Gastrocnemius medialis (tissue), 4 donors: ENCODE measurements at regions of chr21 and their contacts with region 1.

Region 1: GRCh38 chr21:42892931-42893755 is at the start of gene NDUFV3:
- DNase-seq: peak; percentile 99 to 100
- ATAC-seq: peak; percentile 90 to 92
- H3K4me3 ChIP-seq: peak within 1 kb of the TSS; percentile 67 to 80 (median 74)
- H3K27ac ChIP-seq: peak within 1 kb of the TSS; percentile 87 to 95 (median 92)
- H3K4me1 ChIP-seq: peaks cover 12 to 15% of the 10 kb centered on the region in 2 donors
- H3K27me3 ChIP-seq: no peaks in the 10 kb centered on the region
- CTCF ChIP-seq: peak in 1 of 5 experiments; percentile 10
- POLR2A ChIP-seq: peak; percentile 96 to 98
- total RNA-seq, gene NDUFV3: 96.4 to 109 (median 97.7) TPM

Region 2: GRCh38 chr21:41743321-41743720 is 1149.8 kb before region 1 on chr21:
- in situ Hi-C with region 1: no loop called
- intact Hi-C with region 1: no loop called
- DNase-seq: no peak
- ATAC-seq: no peak
- H3K4me3 ChIP-seq: no peak overlapping the region
- H3K27ac ChIP-seq: no peak overlapping the region
- H3K4me1 ChIP-seq: no peaks in the 10 kb centered on the region
- H3K27me3 ChIP-seq: peaks cover 0 to 5% (median 0%) of the 10 kb centered on the region in 3 donors
- CTCF ChIP-seq: no peak
- POLR2A ChIP-seq: no peak

Region 3: DNA sequence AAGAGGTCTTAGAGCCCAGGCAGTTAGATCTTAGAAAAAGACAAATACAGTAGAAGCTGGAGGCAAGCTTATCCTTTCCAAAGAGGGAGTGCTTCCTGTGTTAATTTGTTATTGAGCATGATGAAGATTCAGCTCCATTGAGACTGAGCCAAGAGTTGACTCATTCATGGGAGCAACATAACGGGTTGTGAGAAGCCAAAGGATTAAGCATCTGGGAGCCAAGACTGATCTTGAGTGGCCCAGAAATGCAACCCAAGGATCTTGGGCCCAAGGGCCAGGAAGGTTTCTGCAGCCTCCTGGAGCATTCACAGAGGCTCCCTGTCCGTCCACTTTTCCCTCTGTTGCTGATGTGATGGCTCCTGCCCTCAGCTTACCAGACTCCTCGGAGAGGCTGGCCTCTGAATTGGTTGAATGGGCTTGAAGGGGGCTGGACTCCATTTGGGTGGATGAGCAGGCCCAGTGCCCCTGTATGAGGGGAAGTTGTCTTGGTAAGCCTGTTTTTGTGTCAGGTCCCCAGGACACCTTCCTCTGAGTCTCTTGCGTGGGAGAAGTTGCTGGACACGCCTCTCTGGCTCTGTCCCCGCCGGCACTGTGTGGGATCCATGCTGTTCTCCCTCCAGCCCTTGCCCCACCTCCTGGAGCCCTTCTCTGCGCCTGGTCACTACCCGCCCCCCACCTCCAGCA is 197.3 kb before region 1 on chr21:
- in situ Hi-C with region 1: no loop called
- intact Hi-C with region 1: no loop called
- DNase-seq: no peak
- ATAC-seq: no peak
- H3K4me3 ChIP-seq: no peak overlapping the region
- H3K27ac ChIP-seq: no peak overlapping the region
- H3K4me1 ChIP-seq: no peaks in the 10 kb centered on the region
- H3K27me3 ChIP-seq: no peaks in the 10 kb centered on the region
- CTCF ChIP-seq: no peak
- POLR2A ChIP-seq: no peak

Region 4: GRCh38 chr21:42766739-42767560 is 126.2 kb before region 1 on chr21:
- in situ Hi-C with region 1: no loop called
- intact Hi-C with region 1: no loop called
- DNase-seq: no peak
- ATAC-seq: no peak
- H3K4me3 ChIP-seq: no peak overlapping the region
- H3K27ac ChIP-seq: no peak overlapping the region
- H3K4me1 ChIP-seq: no peaks in the 10 kb centered on the region
- H3K27me3 ChIP-seq: no peaks in the 10 kb centered on the region
- CTCF ChIP-seq: no peak
- POLR2A ChIP-seq: no peak

Region 5: DNA sequence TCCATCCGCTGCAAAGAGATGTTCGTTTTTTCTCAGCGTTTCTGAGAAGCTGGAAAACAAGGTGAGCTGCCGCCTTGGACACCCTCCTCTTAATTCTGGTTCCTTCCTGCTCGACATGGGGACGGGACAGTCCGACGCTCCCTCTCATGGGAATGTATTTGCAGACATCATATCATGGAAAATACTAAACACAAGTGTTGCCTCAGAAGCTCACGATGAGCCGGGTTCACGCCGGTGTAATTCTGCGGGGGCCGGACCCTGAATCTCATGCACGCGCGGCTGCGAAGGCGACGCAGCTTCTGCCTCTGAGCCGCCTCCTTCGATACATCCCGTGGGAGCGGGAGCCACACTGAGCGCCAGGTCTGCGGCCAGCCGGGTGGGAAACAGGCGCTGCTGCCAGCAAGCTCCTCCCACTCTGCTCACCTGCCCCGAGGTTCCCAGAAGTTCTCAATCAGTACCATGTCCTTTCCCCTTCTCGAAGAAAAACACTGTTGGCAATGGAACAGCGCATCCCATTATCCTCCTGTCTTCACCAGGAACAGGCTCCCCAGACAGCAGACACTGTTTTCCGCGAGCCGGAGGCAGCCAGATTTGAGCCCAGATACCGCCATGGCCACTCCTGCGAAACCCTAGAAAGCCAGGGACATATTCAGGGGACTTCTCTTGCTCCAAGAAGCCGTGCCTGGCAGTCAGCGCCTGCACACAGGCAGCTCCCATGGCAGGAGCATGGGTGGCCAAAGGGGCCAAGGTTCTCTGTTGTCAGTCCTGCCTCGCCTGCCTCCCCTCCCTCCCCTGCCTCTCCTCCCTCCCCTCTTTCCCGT is 111.8 kb before region 1 on chr21:
- in situ Hi-C with region 1: loop called in 1 of 4 experiments (anchors 25 kb)
- intact Hi-C with region 1: no loop called
- DNase-seq: no peak
- ATAC-seq: peak in 1 of 2 donors; percentile 25
- H3K4me3 ChIP-seq: peak overlapping the region; percentile 14 to 39 (median 28)
- H3K27ac ChIP-seq: peak overlapping the region in 3 of 4 donors; percentile 52 to 76 (median 67)
- H3K4me1 ChIP-seq: peaks cover 0 to 3% of the 10 kb centered on the region in 2 donors
- H3K27me3 ChIP-seq: peaks cover 31 to 44% (median 32%) of the 10 kb centered on the region in 3 donors
- CTCF ChIP-seq: no peak
- POLR2A ChIP-seq: no peak

Region 6: DNA sequence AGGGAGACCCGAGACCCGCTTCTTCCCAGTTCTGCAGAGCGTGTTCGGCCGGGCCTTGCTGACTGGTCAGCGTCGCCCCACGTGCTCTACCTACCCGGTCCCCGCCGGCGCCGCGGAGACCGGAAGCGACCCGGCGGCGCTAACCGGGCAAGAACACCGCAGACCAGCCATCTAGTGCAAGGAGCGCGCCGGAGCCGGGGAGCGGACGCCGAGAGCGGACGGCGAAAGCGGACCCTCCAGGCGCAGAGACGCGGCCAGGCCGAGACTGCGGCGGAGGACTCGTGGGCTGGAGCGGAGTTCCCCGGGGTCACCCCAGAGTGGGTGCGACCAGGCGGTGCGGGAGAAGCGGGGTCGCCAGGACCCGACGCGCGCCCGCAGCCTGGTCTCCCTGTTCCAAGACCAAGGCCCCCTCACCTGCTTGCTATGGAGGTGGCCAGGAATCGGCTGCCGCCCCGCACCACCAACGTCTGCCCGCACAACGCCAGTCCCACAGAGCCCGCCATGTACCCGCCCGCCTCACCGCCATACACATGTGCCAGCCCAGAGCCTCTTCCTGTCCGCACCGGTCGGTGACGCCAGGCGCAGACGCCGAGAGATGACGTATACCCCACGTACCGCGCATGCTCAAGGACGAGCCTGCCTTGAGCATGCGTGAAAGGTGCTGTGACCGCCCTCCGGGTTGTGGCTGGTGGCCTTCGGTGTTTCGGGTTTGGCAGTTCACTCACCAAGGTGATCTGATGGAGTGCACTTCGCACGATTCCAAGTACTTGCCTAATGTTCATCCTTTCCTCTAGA is 14.0 kb before region 1 on chr21 and contains the start of gene WDR4:
- in situ Hi-C with region 1: no loop called
- intact Hi-C with region 1: loop called (anchors 1 kb)
- DNase-seq: peak; percentile 95 to 97
- ATAC-seq: peak; percentile 97 to 99
- H3K4me3 ChIP-seq: peak within 1 kb of the TSS; percentile 86 to 94 (median 90)
- H3K27ac ChIP-seq: peak within 1 kb of the TSS; percentile 81 to 97 (median 90)
- H3K4me1 ChIP-seq: peaks cover 17% of the 10 kb centered on the region in 2 donors
- H3K27me3 ChIP-seq: no peaks in the 10 kb centered on the region
- CTCF ChIP-seq: no peak
- POLR2A ChIP-seq: peak; percentile 61 to 62
- total RNA-seq, gene WDR4: 1.9 to 13.3 (median 4.4) TPM

Region 7: DNA sequence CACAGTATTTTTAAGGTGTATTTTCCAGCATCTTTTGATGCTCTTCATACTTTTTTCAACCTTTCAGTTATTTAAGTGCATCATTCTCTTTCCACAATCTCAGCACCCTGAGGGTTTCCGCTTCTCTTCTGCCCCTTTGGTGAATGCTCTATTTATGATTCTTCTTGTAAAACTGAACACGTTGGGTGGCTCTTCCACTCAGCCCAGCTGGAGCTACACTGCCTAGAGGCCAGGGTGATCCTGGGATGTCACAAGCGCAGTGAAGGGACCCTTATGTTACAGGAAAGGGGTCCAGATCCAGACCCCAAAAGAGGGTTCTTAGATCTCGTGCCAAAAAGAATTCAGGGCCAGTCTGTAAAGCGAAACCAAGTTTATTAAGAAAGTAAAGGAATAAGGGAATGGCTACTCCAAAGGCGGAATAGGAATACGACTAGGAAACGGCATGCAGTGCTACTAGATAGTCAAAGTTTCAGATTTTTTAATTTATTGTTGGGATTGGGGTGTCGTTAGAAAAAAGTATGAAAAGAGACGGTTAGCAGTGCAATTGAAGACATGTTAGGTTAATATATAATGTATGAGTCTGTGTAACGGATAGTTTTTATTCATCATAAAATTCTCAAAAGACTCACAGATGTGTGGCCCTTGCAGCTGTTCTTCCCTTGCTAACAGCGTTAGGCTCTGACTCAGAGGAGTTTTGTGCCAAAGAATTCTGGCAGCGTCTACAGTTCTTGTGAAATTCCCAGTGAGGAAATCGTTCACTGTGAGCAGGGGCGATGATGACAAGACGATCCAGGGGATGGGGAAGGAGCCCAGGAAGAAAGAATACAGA is 46.7 kb after region 1 on chr21:
- in situ Hi-C with region 1: no loop called
- intact Hi-C with region 1: loop called (anchors 10 kb)
- DNase-seq: peak; percentile 78 to 90
- ATAC-seq: peak; percentile 100
- H3K4me3 ChIP-seq: peak overlapping the region in 3 of 4 donors; percentile 1 to 22 (median 21)
- H3K27ac ChIP-seq: peak overlapping the region; percentile 52 to 64 (median 56)
- H3K4me1 ChIP-seq: peaks cover 11 to 14% of the 10 kb centered on the region in 2 donors
- H3K27me3 ChIP-seq: no peaks in the 10 kb centered on the region
- CTCF ChIP-seq: no peak
- POLR2A ChIP-seq: no peak

Region 8: GRCh38 chr21:42973991-42974831 is 81.1 kb after region 1 on chr21 and contains the start of gene PKNOX1:
- in situ Hi-C with region 1: loop called in 1 of 4 experiments (anchors 10 kb)
- intact Hi-C with region 1: loop called (anchors 1 kb)
- DNase-seq: peak; percentile 97 to 99
- ATAC-seq: peak; percentile 88
- H3K4me3 ChIP-seq: peak within 1 kb of the TSS; percentile 72 to 89 (median 86)
- H3K27ac ChIP-seq: peak within 1 kb of the TSS; percentile 97 to 100 (median 99)
- H3K4me1 ChIP-seq: peaks cover 21 to 24% of the 10 kb centered on the region in 2 donors
- H3K27me3 ChIP-seq: no peaks in the 10 kb centered on the region
- CTCF ChIP-seq: peak in 1 of 5 experiments; percentile 22
- POLR2A ChIP-seq: peak; percentile 80 to 83
- total RNA-seq, gene PKNOX1: 5.3 to 18.0 (median 7.6) TPM

Region 9: DNA sequence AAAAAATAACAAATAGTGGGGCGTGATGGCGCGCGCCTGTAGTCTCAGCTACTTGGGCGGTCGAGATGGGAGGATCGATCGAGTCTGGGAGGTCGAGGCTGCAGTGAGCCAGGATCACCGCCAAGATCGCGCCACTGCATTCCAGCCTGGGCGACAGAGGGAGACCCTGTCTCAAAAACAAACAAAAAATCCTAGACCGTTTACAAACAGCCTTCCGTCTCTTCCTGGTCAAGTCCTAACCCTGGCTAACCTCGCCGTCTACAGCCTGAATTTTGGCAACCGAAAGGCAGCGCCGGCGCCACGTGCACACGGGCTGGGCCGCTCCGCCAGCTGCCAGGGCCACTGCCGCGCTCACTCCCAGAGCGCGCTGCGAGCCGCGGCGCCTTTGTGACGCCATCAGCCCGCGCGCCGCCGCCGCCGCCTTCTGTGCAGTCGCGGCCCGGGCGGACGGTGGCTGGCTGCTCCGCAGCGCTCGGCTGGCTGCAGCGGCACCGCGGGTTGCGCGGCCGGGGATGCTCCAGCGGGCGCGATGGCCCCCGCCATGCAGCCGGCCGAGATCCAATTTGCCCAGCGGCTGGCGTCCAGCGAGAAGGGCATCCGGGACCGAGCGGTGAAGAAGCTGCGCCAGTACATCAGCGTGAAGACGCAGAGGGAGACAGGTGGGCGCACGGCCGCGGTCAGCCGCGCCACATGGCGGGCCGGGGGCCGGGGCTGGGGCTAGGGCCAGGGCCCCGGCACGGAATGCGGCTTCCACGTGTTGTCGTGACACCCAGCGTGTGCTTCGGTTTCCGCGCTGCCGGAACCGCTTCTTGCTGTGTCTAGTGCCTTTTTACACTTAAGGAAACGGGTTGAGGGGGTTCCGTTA is 766.2 kb after region 1 on chr21 and contains the starts of genes HSF2BP and RRP1B:
- in situ Hi-C with region 1: no loop called
- intact Hi-C with region 1: loop called (anchors 5 kb)
- DNase-seq: peak; percentile 51 to 73
- ATAC-seq: peak; percentile 92
- H3K4me3 ChIP-seq: peak within 1 kb of the TSS; percentile 74 to 98 (median 88)
- H3K27ac ChIP-seq: peak within 1 kb of the TSS; percentile 74 to 90 (median 88)
- H3K4me1 ChIP-seq: peaks cover 17 to 19% of the 10 kb centered on the region in 2 donors
- H3K27me3 ChIP-seq: no peaks in the 10 kb centered on the region
- CTCF ChIP-seq: peak in 4 of 5 experiments; percentile 7 to 37 (median 26)
- POLR2A ChIP-seq: peak; percentile 55 to 79
- total RNA-seq, gene HSF2BP: 0.63 TPM in 1 of 4 donors, not detected in the others
- total RNA-seq, gene RRP1B: 12.5 to 24.7 (median 18.9) TPM